Aorta (tissue), 5 donors: ENCODE measurements at regions of chr1 and their contacts with region 1.

Region 1: GRCh38 chr1:157992031-157992832 is 1.2 kb upstream of the KIRREL1 start:
- DNase-seq: peak; percentile 75 to 91
- ATAC-seq: peak; percentile 86
- H3K4me3 ChIP-seq: no peak overlapping the region
- H3K27ac ChIP-seq: peak overlapping the region in 1 of 2 donors; percentile 79
- H3K4me1 ChIP-seq: peaks cover 0 to 2% of the 10 kb centered on the region in 2 donors
- H3K27me3 ChIP-seq: no peaks in the 10 kb centered on the region

Region 2: DNA sequence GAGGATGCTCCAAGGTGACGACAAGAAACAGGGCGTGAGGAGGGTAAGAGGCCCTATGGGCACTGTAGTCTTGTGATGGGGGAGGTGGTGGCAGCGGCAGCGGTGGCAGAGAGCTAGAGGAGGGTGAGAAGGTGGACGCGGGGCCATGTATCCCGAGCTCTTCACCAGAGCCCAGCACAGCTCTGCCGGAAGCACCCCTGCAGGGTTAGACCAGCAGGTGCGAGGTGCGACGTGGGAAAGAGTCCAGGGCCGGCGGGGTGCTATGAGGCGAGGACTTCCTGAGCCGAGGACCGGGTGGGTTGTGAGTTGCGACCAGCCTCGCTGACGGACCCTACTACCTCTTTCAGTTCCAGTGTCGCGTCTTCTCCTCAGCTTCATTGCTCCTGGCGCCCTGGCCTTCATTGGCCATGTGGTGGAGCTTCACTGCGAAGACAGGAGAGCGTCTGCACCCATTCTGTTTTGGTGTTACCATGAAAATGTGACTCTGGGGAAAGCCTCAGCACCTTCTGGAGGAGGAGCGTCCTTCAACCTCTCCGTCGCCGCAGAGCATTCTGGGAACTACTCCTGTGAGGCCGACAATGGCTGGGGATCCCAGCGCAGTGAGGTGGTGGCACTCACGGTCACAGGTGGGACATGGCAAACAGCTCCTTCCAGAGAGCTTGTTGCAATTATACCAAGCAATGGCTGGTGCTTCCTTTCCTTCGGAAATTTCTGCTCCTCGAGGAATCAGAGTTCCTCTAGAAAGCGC is 66.6 kb before region 1 on chr1:
- intact Hi-C with region 1: no loop called
- DNase-seq: no peak
- ATAC-seq: peak; percentile 12
- H3K4me3 ChIP-seq: no peak overlapping the region
- H3K27ac ChIP-seq: no peak overlapping the region
- H3K4me1 ChIP-seq: no peaks in the 10 kb centered on the region
- H3K27me3 ChIP-seq: no peaks in the 10 kb centered on the region

Region 3: GRCh38 chr1:158035976-158036583 is 43.8 kb after region 1 on chr1:
- intact Hi-C with region 1: loop called (anchors 1 to 2 kb)
- DNase-seq: no peak
- ATAC-seq: peak; percentile 63
- H3K4me3 ChIP-seq: no peak overlapping the region
- H3K27ac ChIP-seq: no peak overlapping the region
- H3K4me1 ChIP-seq: peaks cover 0 to 11% of the 10 kb centered on the region in 2 donors
- H3K27me3 ChIP-seq: no peaks in the 10 kb centered on the region

Region 4: DNA sequence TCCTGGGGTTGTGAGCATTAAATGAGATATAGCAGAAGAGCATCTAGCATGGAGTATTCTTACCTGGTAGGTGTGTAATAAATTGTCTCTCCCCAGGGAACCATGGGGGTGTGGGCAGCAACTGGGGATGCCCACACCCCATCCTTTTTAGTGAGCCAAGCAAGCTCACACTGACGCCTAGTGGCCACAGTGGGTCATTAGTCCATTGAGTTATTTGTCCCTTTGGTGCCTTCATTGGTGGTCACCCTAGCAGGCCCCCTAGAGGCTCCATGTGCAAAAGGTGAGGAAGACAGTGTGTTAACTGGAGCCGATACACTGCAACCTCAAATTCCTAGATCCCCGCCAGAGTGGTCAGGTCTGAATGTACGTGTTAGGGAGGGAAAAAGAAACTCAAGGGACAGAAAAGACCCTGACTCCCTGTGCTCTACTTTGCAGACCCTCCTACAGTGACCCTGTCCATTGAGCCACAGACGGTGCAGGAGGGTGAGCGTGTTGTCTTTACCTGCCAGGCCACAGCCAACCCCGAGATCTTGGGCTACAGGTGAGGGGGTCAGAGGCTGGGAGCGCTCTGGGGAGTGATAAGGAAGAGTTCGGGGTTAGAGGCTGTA is 95.2 kb after region 1 on chr1:
- intact Hi-C with region 1: loop called (anchors 1 kb)
- DNase-seq: no peak
- ATAC-seq: peak; percentile 70
- H3K4me3 ChIP-seq: no peak overlapping the region
- H3K27ac ChIP-seq: no peak overlapping the region
- H3K4me1 ChIP-seq: no peaks in the 10 kb centered on the region
- H3K27me3 ChIP-seq: no peaks in the 10 kb centered on the region

Region 5: DNA sequence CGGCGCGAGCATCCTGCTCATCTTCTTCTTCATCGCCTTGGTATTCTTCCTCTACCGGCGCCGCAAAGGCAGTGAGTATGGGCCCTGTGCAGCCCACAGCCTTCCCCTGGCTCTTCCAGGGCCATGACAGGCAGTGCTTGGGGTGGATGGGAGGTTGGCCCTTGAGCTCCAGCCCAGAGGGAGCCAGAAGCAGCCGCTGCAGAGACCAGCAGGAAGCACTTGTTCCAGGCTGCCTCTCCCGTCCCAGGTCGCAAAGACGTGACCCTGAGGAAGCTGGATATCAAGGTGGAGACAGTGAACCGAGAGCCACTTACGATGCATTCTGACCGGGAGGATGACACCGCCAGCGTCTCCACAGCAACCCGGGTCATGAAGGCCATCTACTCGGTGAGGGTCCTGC is 101.1 kb after region 1 on chr1:
- intact Hi-C with region 1: loop called in 1 of 2 experiments (anchors 2 kb)
- DNase-seq: no peak
- ATAC-seq: no peak
- H3K4me3 ChIP-seq: no peak overlapping the region
- H3K27ac ChIP-seq: no peak overlapping the region
- H3K4me1 ChIP-seq: no peaks in the 10 kb centered on the region
- H3K27me3 ChIP-seq: no peaks in the 10 kb centered on the region

Region 6: GRCh38 chr1:158112994-158113758 is 120.9 kb after region 1 on chr1:
- intact Hi-C with region 1: loop called in 1 of 2 experiments (anchors 5 kb)
- DNase-seq: peak in 1 of 2 donors; percentile 78
- ATAC-seq: no peak
- H3K4me3 ChIP-seq: peak overlapping the region; percentile 21 to 49
- H3K27ac ChIP-seq: no peak overlapping the region
- H3K4me1 ChIP-seq: no peaks in the 10 kb centered on the region
- H3K27me3 ChIP-seq: no peaks in the 10 kb centered on the region